Psoas muscle (tissue), 8 donors: ENCODE measurements at regions of chr10 and their contacts with region 1.

Region 1: GRCh38 chr10:73910764-73911552 is at the start of gene PLAU:
- DNase-seq: peak; percentile 59 to 68
- ATAC-seq: peak in 2 of 4 donors; percentile 20 to 38
- H3K4me3 ChIP-seq: peak within 1 kb of the TSS; percentile 70
- H3K27ac ChIP-seq: peak within 1 kb of the TSS; percentile 86
- H3K4me1 ChIP-seq: peaks cover 32% of the 10 kb centered on the region
- H3K27me3 ChIP-seq: peaks cover 0 to 14% (median 0%) of the 10 kb centered on the region in 3 donors
- CTCF ChIP-seq: no peak
- total RNA-seq, gene PLAU: 5.0 to 18.2 (median 10.6) TPM

Region 2: DNA sequence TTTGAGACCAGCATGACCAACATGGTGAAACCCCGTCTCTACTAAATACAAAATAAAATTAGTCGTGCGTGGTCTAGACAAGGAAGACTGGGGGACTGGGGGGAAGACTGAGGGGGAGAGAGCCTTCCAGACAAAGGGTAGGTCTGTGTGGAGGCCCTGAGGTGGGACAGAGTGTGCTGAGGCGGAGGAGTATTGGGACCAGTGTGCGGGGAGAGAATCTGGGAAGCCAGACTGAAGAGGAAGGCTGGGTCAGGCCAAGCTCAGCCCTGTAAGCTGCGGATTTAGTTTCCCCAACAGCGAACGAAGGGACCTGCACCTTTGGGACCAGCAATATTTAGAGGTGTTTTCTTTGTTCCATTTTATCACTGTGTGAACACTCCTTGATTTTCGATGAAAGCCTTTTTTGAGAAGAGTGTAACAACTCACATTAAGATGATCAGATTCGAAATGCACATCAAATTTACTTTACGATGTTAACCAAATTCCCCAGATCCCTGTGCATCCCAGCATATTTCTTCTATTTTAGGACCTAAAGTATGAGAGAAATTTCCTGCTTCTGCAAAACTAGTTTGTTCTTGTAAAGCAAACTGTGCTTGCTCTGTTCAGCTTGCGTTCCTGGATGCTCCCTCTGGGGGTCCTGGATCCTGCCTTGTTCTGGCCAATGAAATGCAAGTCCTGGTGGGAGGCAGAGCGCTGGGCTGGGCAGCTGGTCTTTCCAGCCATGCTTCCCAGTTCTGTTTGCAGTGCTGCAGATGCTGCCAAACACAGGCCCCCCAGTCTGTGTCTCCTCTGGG is 39.4 kb after region 1 on chr10:
- intact Hi-C with region 1: no loop called
- DNase-seq: no peak
- ATAC-seq: no peak
- H3K4me3 ChIP-seq: no peak overlapping the region
- H3K27ac ChIP-seq: no peak overlapping the region
- H3K4me1 ChIP-seq: no peaks in the 10 kb centered on the region
- H3K27me3 ChIP-seq: no peaks in the 10 kb centered on the region
- CTCF ChIP-seq: no peak

Region 3: DNA sequence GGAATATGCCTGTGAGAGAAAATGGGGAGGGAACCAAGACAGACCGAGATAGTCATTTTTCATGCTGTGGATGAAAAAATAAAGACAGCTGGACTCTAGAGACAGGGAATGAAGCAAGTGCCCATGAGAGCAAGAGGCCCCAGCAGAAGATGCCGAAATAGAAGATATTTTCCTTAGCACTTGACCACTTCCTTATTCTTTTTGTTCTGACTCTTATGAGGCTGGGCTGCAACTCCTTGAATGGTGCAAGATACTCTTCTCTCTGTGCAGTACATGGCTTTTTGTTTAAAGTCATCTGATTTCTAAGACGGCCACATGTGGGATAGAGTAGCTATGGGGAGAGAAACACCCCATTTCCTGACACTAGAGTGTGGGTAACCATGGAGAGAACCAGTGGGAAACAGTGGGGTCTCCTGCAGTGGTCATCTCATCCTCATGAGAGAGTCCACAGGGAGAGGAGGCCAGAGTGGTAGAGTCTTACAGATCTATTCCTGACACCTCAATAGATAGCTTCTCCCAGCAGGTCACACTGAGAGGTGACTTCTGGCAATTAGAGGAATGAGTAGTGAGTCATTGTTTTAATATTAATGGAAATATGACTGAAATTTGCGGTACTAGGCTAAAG is 69.0 kb after region 1 on chr10:
- intact Hi-C with region 1: loop called in 1 of 2 experiments (anchors 10 kb)
- DNase-seq: no peak
- ATAC-seq: peak in 1 of 4 donors; percentile 15
- H3K4me3 ChIP-seq: no peak overlapping the region
- H3K27ac ChIP-seq: no peak overlapping the region
- H3K4me1 ChIP-seq: peaks cover 12% of the 10 kb centered on the region
- H3K27me3 ChIP-seq: no peaks in the 10 kb centered on the region
- CTCF ChIP-seq: no peak